ENCODE measurements at regions of chr3 and their contacts with region 1.

Region 1: DNA sequence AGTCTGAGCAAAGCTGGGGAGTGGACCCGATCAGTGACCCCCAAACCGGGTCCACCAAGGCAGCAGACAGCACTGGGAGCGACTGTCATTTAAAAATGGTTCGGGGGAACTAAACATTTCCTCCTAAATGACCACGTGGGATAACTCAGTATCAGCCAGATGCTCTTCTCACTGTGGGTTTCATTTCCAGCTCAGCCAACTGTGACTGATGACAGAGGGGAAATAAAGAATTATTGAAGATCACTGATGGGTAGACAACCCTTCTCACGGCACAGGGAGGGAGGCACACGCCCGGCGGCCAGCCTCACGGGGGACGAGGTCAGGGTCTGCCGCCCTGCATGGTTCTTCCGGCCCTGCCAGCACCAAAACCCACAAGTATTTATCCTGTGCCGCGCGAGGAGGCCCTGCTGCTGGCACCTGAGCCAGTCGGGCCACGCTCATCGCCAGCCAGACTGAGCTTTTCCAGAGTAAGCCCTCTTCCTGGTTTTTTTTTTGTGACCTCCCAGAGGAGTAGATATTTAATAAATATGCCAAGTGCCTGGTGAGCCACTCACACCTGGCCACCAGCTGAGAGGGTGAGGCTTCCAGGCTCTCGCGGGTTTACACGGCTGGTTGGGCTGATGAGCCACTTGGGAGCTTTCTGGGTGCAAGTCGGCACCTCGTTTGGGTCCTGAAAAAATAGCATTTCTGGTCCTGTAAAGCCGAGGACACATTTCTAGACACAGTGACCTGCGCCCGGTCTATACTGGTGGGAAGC is 6.2 kb downstream of the MELTF start:
- DNase-seq: peak; percentile 70
- ATAC-seq: peak; percentile 79
- H3K4me3 Mint-ChIP-seq: peak overlapping the region; percentile 75
- H3K27ac Mint-ChIP-seq: peak overlapping the region; percentile 96
- H3K4me1 Mint-ChIP-seq: peaks cover 41% of the 10 kb centered on the region
- H3K27me3 Mint-ChIP-seq: peaks cover 9% of the 10 kb centered on the region
- CTCF ChIP-seq: no peak

Region 2: DNA sequence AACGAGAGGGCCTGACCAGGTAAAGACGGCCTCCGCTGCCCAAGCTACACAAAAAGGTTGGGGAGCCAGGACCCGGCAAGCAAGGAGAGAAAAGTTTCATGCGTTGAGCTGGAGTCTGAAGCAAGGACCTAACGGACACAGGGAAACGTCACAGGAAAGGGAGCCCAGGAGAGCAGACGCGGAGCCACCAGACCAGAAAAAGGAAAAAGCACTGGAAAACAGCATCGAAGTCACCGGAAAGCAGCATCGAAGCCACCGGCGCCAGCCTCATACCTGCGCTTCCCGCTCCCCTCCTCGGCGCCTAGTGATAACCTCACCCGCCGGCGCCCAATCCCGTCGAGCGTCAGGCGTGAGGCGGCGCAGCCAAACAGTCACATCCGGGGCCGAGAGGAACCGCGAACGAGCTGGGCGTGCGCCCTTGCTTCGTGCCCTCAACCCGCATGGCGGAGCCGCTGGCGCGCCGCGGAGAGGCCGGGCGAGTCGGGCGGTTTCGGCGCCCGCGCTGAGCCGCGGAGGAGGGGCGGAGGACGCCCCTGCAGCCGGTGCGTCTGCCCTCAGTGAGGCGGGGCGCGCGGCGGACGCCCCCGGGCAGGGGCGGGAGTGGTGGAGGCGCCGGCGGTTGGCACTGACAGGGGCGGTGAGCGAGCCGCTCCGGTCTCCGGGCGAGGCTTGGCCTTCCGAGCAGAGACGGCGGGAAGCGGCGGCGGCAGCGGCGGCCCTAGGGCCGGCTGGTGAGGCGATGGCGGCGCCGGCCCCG is 455.0 kb before region 1 on chr3 and contains the starts of genes FBXO45 and WDR53:
- CTCF ChIA-PET with region 1: no interaction called
- POLR2A ChIA-PET with region 1: no interaction called
- intact Hi-C with region 1: no loop called
- DNase-seq: peak; percentile 92
- ATAC-seq: peak; percentile 90
- H3K4me3 Mint-ChIP-seq: peak within 1 kb of the TSS; percentile 98
- H3K27ac Mint-ChIP-seq: peak within 1 kb of the TSS; percentile 97
- H3K4me1 Mint-ChIP-seq: peaks cover 29% of the 10 kb centered on the region
- H3K27me3 Mint-ChIP-seq: no peaks in the 10 kb centered on the region
- CTCF ChIP-seq: no peak
- total RNA-seq, gene FBXO45: 5.7 and 6.5 TPM in 2 replicates
- total RNA-seq, gene WDR53: 14.1 and 14.3 TPM in 2 replicates

Region 3: DNA sequence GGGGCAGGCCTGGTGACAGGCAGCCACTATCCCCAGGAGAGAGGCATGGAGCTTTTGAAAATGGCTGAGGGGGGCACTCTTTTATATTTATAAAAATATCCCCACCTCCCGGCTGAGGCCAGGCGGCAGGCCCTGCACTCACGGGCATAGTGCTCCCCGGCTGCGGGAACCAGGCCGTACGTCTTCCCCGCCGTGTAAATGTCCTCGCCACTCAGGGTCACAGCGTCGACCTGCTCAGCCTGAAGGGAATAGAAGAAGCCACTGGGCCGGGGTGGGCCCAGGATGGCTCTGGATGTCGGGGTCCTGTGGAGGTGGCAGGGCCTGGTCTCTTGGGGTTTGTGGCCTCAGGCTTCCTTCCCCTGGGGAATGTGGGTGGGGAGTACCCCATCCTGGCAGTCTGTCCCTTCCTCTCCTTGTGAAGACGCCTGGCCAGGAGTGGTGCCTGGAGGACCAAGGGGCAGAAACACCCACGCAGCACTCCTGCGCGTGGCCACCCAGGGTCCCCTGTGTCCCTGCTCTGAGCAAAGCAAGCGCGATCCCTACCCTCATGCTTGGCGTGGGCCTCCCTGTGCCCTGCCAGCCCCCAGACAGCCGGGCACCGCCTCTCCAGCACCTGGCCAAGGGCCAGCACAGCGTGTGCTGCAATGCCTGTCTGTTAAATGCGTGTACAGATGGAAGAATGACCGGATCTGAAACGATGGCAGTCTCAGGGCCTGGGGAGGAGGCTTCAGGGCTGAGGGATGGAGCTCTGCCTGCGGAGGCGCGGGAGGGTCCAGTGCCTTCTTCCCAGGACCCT is 12.7 kb before region 1 on chr3:
- CTCF ChIA-PET with region 1: interaction called, 78 read pairs
- POLR2A ChIA-PET with region 1: interaction called, 91 read pairs
- intact Hi-C with region 1: no loop called
- DNase-seq: no peak
- ATAC-seq: no peak
- H3K4me3 Mint-ChIP-seq: no peak overlapping the region
- H3K27ac Mint-ChIP-seq: no peak overlapping the region
- H3K4me1 Mint-ChIP-seq: no peaks in the 10 kb centered on the region
- H3K27me3 Mint-ChIP-seq: no peaks in the 10 kb centered on the region
- CTCF ChIP-seq: no peak

Measured in activated B cell treated with CpG ODN at 0.5 μM for 24 hours (primary cell).